Tibial artery (tissue), 4 donors: ENCODE measurements at regions of chr3 and their contacts with region 1.

Region 1: GRCh38 chr3:136752422-136753325 is 496 bp upstream of the STAG1 start:
- DNase-seq: peak; percentile 98 to 99
- H3K4me3 ChIP-seq: peak overlapping the region; percentile 77 to 91
- H3K27ac ChIP-seq: peak overlapping the region; percentile 95 to 98
- H3K4me1 ChIP-seq: peaks cover 0 to 35% (median 25%) of the 10 kb centered on the region in 4 donors
- H3K27me3 ChIP-seq: no peaks in the 10 kb centered on the region
- CTCF ChIP-seq: peak in 1 of 2 experiments; percentile 97

Region 2: DNA sequence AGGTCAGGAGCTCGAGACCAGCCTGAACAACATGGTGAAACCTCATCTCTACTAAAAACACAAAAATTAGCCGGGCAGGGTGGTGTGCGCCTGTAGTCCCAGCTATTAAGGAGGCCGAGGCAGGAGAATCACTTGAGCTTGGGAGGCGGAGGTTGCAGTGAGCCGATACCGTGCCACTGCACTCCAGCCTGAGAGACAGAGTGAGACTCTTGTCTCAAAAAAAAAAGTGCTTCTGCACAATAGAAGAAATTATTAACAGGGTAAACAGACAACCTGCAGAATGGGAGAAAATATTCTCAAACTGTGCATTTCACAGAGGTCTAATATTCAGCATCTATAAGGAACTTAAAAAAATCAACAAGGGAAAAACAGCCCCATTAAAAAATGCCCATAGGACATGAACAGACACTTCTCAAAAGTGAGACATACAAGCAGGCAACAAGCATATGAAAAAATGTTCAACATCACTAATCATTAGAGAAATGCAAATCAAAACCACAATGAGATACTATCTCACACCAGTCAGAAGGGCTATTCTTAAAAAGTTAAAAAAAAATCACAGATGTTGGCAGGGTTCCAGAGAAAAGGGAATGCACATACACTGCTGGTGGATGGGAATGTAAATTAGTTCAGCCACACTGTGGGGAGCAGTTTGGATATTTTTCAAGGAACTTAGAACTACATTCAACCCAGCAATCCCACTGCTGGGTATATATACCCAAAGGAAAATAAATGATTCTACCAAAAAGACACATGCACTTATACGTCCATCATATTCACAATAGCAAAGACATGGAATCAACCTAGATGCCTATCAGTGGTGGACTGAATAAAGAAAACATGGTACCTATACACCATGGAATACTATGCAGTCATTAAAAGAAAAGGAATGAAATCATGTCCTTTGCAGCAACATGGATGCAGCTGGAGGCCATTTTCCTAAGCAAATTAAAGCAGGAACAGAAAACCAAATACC is 632.0 kb before region 1 on chr3:
- intact Hi-C with region 1: no loop called
- DNase-seq: no peak
- H3K4me3 ChIP-seq: no peak overlapping the region
- H3K27ac ChIP-seq: no peak overlapping the region
- H3K4me1 ChIP-seq: no peaks in the 10 kb centered on the region
- H3K27me3 ChIP-seq: no peaks in the 10 kb centered on the region
- CTCF ChIP-seq: no peak

Region 3: DNA sequence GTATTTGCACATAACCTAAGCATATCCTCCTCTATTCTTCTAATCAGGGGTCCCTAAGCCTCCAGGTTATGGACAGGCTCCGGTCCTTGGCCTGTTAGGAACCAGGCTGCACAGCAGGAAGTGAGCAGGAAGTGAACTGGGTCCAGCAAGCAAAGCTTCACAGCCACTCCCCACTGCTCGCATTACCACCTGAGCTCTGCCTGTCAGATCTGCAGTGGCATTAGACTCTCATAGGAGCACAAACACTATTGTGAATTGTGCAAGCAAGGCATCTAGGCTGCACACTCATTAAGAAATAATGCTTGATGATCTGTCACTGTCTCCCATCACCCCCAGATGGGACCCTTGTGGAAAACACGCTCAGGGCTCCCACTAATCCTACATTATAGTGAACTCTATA is 566.3 kb before region 1 on chr3:
- intact Hi-C with region 1: loop called (anchors 5 kb)
- DNase-seq: no peak
- H3K4me3 ChIP-seq: no peak overlapping the region
- H3K27ac ChIP-seq: no peak overlapping the region
- H3K4me1 ChIP-seq: peaks cover 0 to 96% (median 52%) of the 10 kb centered on the region in 4 donors
- H3K27me3 ChIP-seq: no peaks in the 10 kb centered on the region
- CTCF ChIP-seq: no peak

Region 4: GRCh38 chr3:136250226-136250902 is 502.3 kb before region 1 on chr3 and contains the start of gene PCCB:
- intact Hi-C with region 1: loop called (anchors 2 kb)
- DNase-seq: peak; percentile 91 to 95
- H3K4me3 ChIP-seq: peak within 1 kb of the TSS; percentile 73 to 81
- H3K27ac ChIP-seq: peak within 1 kb of the TSS; percentile 83 to 86
- H3K4me1 ChIP-seq: peaks cover 0 to 15% (median 6%) of the 10 kb centered on the region in 4 donors
- H3K27me3 ChIP-seq: no peaks in the 10 kb centered on the region
- CTCF ChIP-seq: peak; percentile 80 to 91

Region 5: GRCh38 chr3:136861890-136862616 is 109.4 kb after region 1 on chr3 and contains the start of gene NCK1:
- intact Hi-C with region 1: loop called (anchors 10 kb)
- DNase-seq: peak; percentile 100
- H3K4me3 ChIP-seq: peak within 1 kb of the TSS; percentile 76 to 91
- H3K27ac ChIP-seq: peak within 1 kb of the TSS; percentile 92 to 98
- H3K4me1 ChIP-seq: peaks cover 0 to 19% (median 10%) of the 10 kb centered on the region in 4 donors
- H3K27me3 ChIP-seq: no peaks in the 10 kb centered on the region
- CTCF ChIP-seq: peak in 1 of 2 experiments; percentile 17